ENCODE measurements at regions of chr15 and their contacts with region 1.

Region 1: GRCh38 chr15:41904541-41905005 is 10.7 kb upstream of the SPTBN5 start:
- DNase-seq: peak; percentile 58 to 81 (median 65)
- H3K4me3 ChIP-seq: no peak overlapping the region
- H3K4me3 Mint-ChIP-seq: no peak overlapping the region
- H3K27ac ChIP-seq: no peak overlapping the region
- H3K27ac Mint-ChIP-seq: peak overlapping the region in 7 of 8 donors; percentile 56 to 97 (median 85)
- H3K4me1 ChIP-seq: no peaks in the 10 kb centered on the region
- H3K4me1 Mint-ChIP-seq: peaks cover 7 to 9% (median 8%) of the 10 kb centered on the region in 3 donors
- H3K27me3 ChIP-seq: no peaks in the 10 kb centered on the region
- H3K27me3 Mint-ChIP-seq: no peaks in the 10 kb centered on the region

Region 2: DNA sequence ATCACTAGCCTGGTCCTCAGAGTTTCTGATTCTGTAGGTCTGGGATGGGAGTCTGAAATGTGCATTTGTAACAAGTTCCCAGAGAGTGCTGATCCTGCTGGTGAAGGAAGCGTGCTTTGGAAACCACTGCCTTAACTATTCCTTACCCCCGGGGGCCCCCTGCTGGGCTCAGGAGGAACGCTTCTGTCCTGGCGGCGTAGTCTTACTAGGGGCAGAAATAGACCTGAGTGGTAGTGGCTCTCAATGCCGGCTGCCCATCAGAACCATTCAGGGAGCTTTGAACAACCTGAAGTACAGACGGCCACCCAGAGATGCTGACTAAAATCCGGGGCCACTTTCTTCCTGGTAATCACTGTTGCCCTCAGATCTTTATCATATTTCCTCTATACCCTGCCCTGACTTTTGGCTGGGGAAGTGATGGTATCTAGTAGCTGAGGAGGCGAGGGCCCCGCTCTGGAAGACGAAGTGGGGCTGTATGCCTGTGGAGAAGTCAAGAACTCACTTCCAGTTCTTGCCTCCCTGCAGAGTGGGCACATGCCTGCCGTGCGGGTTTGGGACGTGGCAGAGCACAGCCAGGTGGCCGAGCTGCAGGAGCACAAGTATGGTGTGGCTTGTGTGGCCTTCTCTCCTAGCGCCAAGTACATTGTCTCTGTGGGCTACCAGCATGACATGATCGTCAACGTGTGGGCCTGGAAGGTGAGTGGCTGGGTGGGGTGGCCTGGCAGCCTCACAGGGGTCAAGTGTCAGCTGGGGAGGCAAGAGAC is 93.0 kb before region 1 on chr15:
- CTCF ChIA-PET with region 1: interaction called, 28 read pairs
- POLR2A ChIA-PET with region 1: no interaction called
- DNase-seq: peak; percentile 64 to 82 (median 65)
- H3K4me3 ChIP-seq: no peak overlapping the region
- H3K4me3 Mint-ChIP-seq: no peak overlapping the region
- H3K27ac ChIP-seq: no peak overlapping the region
- H3K27ac Mint-ChIP-seq: peak overlapping the region in 5 of 8 donors; percentile 12 to 65 (median 35)
- H3K4me1 ChIP-seq: peaks cover 7% of the 10 kb centered on the region
- H3K4me1 Mint-ChIP-seq: peaks cover 10 to 14% (median 12%) of the 10 kb centered on the region in 3 donors
- H3K27me3 ChIP-seq: no peaks in the 10 kb centered on the region
- H3K27me3 Mint-ChIP-seq: no peaks in the 10 kb centered on the region

Region 3: DNA sequence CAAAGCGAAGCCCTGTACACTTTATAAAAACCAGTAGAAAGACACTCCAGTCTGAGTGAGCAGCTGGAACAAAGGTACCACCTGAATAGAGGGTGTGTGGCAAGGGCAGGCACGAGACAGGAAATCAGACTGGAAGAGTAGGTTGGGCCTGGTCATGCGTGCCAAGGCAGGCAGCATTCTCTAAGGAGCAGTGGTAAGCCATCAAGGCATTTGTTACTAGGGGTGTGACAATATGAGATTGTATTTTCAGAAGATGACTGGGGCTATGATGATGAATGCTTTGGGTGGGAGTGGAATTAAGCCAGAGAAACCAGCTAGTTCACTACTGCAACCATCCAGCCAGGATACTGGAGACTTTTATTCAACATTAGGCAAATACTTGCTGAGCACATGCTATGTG is 71.7 kb before region 1 on chr15:
- CTCF ChIA-PET with region 1: interaction called, 12 read pairs
- POLR2A ChIA-PET with region 1: no interaction called
- DNase-seq: no peak
- H3K4me3 ChIP-seq: no peak overlapping the region
- H3K4me3 Mint-ChIP-seq: peak overlapping the region in 4 of 7 donors; percentile 3 to 66 (median 40)
- H3K27ac ChIP-seq: no peak overlapping the region
- H3K27ac Mint-ChIP-seq: peak overlapping the region in 7 of 8 donors; percentile 2 to 90 (median 64)
- H3K4me1 ChIP-seq: peaks cover 45% of the 10 kb centered on the region
- H3K4me1 Mint-ChIP-seq: peaks cover 50 to 70% (median 60%) of the 10 kb centered on the region in 3 donors
- H3K27me3 ChIP-seq: no peaks in the 10 kb centered on the region
- H3K27me3 Mint-ChIP-seq: peaks cover 0 to 3% of the 10 kb centered on the region in 2 donors

Region 4: GRCh38 chr15:41936649-41937567 is 32.3 kb after region 1 on chr15:
- CTCF ChIA-PET with region 1: interaction called, 68 read pairs
- POLR2A ChIA-PET with region 1: interaction called, 5 read pairs
- DNase-seq: peak; percentile 74 to 90 (median 78)
- H3K4me3 ChIP-seq: peak overlapping the region; percentile 12
- H3K4me3 Mint-ChIP-seq: peak overlapping the region; percentile 31 to 91 (median 77)
- H3K27ac ChIP-seq: peak overlapping the region; percentile 88
- H3K27ac Mint-ChIP-seq: peak overlapping the region; percentile 94 to 100 (median 100)
- H3K4me1 ChIP-seq: peaks cover 61% of the 10 kb centered on the region
- H3K4me1 Mint-ChIP-seq: peaks cover 57 to 66% (median 66%) of the 10 kb centered on the region in 3 donors
- H3K27me3 ChIP-seq: no peaks in the 10 kb centered on the region
- H3K27me3 Mint-ChIP-seq: no peaks in the 10 kb centered on the region

Region 5: GRCh38 chr15:41999290-42000285 is 95.0 kb after region 1 on chr15:
- CTCF ChIA-PET with region 1: no interaction called
- POLR2A ChIA-PET with region 1: no interaction called
- DNase-seq: no peak
- H3K4me3 ChIP-seq: no peak overlapping the region
- H3K4me3 Mint-ChIP-seq: no peak overlapping the region
- H3K27ac ChIP-seq: no peak overlapping the region
- H3K27ac Mint-ChIP-seq: no peak overlapping the region
- H3K4me1 ChIP-seq: no peaks in the 10 kb centered on the region
- H3K4me1 Mint-ChIP-seq: no peaks in the 10 kb centered on the region
- H3K27me3 ChIP-seq: no peaks in the 10 kb centered on the region
- H3K27me3 Mint-ChIP-seq: peaks cover 3 to 8% of the 10 kb centered on the region in 2 donors

Measured in CD8-positive, alpha-beta memory T cell (primary cell).